ENCODE measurements at regions of chr11 and their contacts with region 1.

Region 1: GRCh38 chr11:2305140-2305840 is 3.5 kb downstream of the TSPAN32 start:
- DNase-seq: peak; percentile 95
- ATAC-seq: peak; percentile 34

Region 2: DNA sequence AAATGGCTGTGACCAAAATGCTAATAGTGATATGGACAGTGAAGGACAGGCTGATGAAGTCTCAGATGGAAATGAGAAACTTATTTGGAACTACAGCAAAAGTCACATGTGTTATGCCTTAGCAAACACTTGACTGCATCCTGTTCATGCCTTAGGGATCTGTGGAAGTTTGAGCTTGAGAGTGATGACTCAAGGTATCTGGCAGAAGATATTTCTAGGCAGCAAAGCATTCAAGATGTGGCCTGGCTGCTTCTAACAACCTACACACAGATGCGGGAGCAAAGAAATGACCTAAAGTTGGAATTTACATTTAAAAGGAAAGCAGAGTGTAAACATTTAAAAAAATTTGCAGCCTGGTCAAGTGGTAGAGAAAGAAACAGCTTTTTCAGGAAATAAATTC is 43.7 kb after region 1 on chr11:
- intact Hi-C with region 1: loop called (anchors 1 kb)
- DNase-seq: no peak
- ATAC-seq: no peak

Region 3: GRCh38 chr11:2400069-2400760 is 94.9 kb after region 1 on chr11 and contains the start of gene TSSC4:
- intact Hi-C with region 1: loop called (anchors 1 kb)
- DNase-seq: peak; percentile 100
- ATAC-seq: peak; percentile 94
- total RNA-seq, gene TSSC4: 31.4 TPM

Region 4: DNA sequence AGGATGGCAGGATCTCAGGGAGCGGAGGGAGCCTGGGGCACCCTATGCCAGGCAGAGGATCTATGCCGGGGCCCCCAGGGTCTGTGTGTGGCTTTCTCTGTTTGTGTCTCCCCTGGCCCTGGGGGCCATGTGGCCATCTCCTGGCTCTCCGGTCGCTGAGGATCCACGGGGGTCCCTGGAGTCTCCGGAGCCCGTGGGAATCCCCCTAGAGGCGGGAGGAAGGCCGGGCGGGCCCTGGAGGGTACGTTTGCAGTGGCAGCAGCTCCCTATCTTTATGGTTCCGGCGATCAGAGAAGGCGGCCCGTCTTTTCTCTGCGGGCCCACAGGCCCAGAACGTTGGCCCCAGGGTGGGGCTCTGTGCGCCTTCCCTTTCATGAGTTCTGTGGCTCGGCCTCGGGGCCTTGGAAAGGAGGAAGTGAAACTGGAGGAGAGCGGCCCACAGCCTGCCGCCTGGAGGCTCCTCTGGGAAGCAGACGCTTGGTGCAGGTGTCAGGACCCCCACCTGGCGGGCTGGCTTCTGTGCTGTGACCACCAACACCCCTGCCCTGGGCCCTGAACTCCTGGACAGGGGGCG is 221.6 kb after region 1 on chr11:
- intact Hi-C with region 1: loop called (anchors 5 kb)
- DNase-seq: peak; percentile 79
- ATAC-seq: peak; percentile 21